IMR-90 (cell line): ENCODE measurements at regions of chr1 and their contacts with region 1.

Region 1: GRCh38 chr1:11629184-11630016 is 24.8 kb downstream of the FBXO2 start:
- DNase-seq: no peak
- ATAC-seq: no peak
- H3K4me3 ChIP-seq: no peak overlapping the region
- H3K27ac ChIP-seq: no peak overlapping the region
- H3K4me1 ChIP-seq: no peaks in the 10 kb centered on the region
- H3K27me3 ChIP-seq: peaks cover 9% of the 10 kb centered on the region; the same call in 1 of the 2 replicates
- CTCF ChIP-seq: no peak
- POLR2A ChIP-seq: no peak
- RAD21 ChIP-seq: no peak

Region 2: DNA sequence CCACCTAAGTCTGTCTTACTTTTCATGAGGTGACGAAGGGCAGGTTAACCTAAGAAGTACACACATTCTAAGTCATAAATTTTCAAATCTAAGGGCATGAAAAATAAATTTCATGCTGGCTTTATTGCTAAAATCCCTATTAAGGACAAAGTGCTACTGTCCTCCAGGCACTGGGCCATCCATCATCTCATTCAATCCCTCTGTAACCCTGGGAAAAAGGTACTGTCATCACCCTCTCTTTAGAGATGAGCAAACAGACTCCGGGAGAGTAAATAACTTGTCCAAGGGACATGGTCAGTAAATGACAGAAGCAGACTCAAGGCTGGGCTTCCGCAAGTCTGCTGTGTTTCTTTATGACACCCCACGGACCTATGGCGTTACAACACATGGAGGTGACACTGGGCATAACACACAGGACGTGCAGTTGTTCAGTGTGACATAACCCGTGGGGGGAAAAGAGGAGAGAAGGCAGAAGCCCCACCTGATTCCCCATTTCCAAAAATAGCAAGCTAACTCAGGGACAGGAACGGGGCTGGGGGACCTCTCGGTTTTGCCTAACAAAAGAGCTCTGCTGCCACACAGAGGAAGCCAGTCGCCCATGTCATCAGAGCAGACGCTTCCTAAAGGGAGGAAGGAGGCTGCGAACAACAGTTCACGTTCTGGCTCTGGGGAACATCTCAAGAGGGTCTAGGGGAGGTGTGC is 557.0 kb before region 1 on chr1:
- CTCF ChIA-PET with region 1: no interaction called
- POLR2A ChIA-PET with region 1: interaction called, 26 read pairs
- dilution Hi-C with region 1: no loop called
- in situ Hi-C with region 1: no loop called
- intact Hi-C with region 1: no loop called
- DNase-seq: no peak
- ATAC-seq: no peak
- H3K4me3 ChIP-seq: no peak overlapping the region
- H3K27ac ChIP-seq: no peak overlapping the region
- H3K4me1 ChIP-seq: no peaks in the 10 kb centered on the region
- H3K27me3 ChIP-seq: no peaks in the 10 kb centered on the region
- CTCF ChIP-seq: no peak
- POLR2A ChIP-seq: no peak
- RAD21 ChIP-seq: no peak